ENCODE measurements at regions of chr7 and their contacts with region 1.

Region 1: DNA sequence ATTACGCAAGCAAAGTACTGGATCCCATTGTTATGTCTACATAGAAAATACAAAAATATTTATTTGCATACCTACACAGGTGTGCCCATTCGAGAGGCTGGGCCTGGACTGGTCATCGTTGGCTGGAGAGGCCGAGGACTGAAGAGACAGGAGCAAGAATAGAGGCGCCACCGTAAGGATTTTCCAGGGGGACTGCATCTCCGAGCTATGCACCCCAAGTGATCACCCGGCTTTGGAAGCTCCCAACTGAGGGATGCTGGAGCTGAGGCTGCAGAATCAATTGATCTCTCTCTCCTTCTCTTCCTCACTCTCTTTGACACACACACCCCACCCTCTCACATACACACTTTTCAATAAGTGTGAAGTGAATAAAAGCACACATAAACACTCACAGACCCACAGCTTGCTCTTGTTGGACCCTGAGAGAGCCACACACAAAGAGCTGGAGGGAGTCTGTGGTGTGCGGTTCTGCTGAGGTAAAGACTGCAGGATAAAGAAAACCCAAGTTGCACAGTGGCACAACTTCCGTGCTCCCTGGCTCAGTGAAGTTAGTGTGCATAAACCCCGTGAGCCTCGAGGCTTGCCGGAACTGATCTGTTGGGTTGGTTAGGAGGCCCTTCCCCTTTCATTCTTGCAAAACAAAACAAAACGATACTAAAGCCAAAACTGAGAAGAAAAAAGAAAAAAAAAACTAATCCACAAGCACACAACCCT is at the start of gene AOAH:
- DNase-seq: peak; percentile 83
- H3K4me3 Mint-ChIP-seq: peak within 1 kb of the TSS; percentile 94
- H3K27ac Mint-ChIP-seq: peak within 1 kb of the TSS; percentile 96
- H3K4me1 Mint-ChIP-seq: peaks cover 71% of the 10 kb centered on the region
- H3K27me3 Mint-ChIP-seq: no peaks in the 10 kb centered on the region
- total RNA-seq, gene AOAH: 33.4 and 33.5 TPM in 2 replicates

Region 2: GRCh38 chr7:36686499-36686898 is 37.6 kb before region 1 on chr7:
- intact Hi-C with region 1: loop called (anchors 1 kb)
- DNase-seq: peak; percentile 37
- H3K4me3 Mint-ChIP-seq: peak overlapping the region; percentile 49
- H3K27ac Mint-ChIP-seq: peak overlapping the region; percentile 93
- H3K4me1 Mint-ChIP-seq: peaks cover 79% of the 10 kb centered on the region
- H3K27me3 Mint-ChIP-seq: no peaks in the 10 kb centered on the region

Region 3: GRCh38 chr7:36746347-36746746 is 22.2 kb after region 1 on chr7:
- intact Hi-C with region 1: loop called (anchors 2 kb)
- DNase-seq: no peak
- H3K4me3 Mint-ChIP-seq: no peak overlapping the region
- H3K27ac Mint-ChIP-seq: no peak overlapping the region
- H3K4me1 Mint-ChIP-seq: peaks cover 25% of the 10 kb centered on the region
- H3K27me3 Mint-ChIP-seq: peaks cover 3% of the 10 kb centered on the region

Region 4: DNA sequence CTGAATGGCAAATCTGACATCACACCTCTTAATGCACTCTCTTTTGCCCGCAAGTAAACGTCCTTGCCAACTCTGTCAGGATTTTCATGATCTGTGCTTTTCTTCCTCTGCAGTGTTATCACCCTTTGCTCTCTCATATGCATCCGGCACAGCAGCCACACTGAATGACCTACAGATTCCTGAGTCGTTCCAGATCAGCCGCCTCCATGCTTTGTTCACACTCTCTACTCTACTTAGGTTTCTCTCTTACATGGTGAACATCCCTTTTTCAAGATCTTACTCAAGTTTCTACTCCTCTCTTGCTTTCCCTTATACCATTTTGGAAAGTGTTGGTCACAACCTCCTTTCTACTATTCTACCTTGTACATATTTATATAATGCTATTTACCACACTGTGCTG is 127.9 kb after region 1 on chr7:
- intact Hi-C with region 1: loop called (anchors 1 kb)
- DNase-seq: no peak
- H3K4me3 Mint-ChIP-seq: no peak overlapping the region
- H3K27ac Mint-ChIP-seq: peak overlapping the region; percentile 78
- H3K4me1 Mint-ChIP-seq: peaks cover 13% of the 10 kb centered on the region
- H3K27me3 Mint-ChIP-seq: no peaks in the 10 kb centered on the region

Region 5: DNA sequence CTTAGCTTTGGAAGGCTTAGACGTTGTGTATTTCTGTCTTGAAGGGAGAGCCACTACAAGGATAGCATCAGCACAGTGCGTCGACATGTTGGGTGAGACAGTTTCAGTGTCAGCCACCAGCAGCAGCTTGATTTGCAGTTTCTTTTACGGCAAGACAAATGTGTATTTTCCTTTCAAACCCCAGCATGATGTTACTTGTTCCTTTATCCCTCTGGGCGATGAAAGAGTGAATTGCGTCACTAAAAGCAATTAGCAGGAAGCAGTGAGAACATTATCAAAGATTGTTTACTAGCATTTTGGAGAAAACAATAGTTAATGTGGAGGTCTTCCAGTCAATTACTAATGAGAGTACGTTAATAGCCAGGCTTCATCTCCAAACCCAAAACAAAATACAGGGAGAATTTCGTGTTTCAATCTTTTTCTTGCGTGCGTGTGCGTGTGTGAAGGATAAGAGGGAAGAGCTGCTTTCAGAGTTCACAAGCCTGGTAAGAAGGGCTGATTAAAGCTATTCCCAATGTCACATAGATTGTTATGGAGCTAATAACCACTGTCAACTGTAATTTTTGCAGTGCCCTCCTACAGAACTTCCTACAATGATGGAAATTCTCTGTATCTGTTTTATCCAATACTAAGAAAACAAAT is 157.2 kb after region 1 on chr7:
- intact Hi-C with region 1: no loop called
- DNase-seq: no peak
- H3K4me3 Mint-ChIP-seq: no peak overlapping the region
- H3K27ac Mint-ChIP-seq: no peak overlapping the region
- H3K4me1 Mint-ChIP-seq: peaks cover 24% of the 10 kb centered on the region
- H3K27me3 Mint-ChIP-seq: no peaks in the 10 kb centered on the region

Region 6: GRCh38 chr7:36967387-36967786 is 243.3 kb after region 1 on chr7:
- intact Hi-C with region 1: loop called (anchors 10 kb)
- DNase-seq: no peak
- H3K4me3 Mint-ChIP-seq: no peak overlapping the region
- H3K27ac Mint-ChIP-seq: no peak overlapping the region
- H3K4me1 Mint-ChIP-seq: peaks cover 39% of the 10 kb centered on the region
- H3K27me3 Mint-ChIP-seq: no peaks in the 10 kb centered on the region

Measured in activated T-helper 2 cell treated with anti-CD3 and anti-CD28 coated beads, Interferon-gamma antibody, Interleukin-2, Interleukin-4, amounts not matched to agents 10 μg/mL and 5 μg/mL and 100 μg/mL, durations not matched to agents 14 hours and 24 hours and 36 hours (primary cell).